GM12878 (cell line): ENCODE measurements at regions of chr15 and their contacts with region 1.

Region 1: DNA sequence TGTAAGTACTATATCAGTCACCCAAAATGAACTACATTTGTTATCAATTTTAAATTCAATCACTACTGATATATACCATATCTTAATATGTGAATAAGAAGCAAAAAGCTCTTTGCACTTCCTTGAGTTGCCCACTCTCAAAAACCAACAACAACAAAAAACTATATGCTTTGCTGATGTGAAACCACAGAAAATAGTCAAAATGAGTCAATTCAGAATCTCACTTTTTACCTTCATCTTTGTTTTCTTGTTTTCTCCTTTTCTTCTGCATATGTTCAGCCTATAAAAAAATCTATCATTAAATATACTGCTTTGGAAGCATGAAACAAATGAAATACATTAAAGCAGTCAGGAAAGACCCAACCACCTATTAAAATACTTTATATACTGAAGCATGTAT is 80.7 kb downstream of the UBR1 start:
- DNase-seq: no peak
- ATAC-seq: no peak
- H3K4me3 ChIP-seq: no peak overlapping the region
- H3K27ac ChIP-seq: no peak overlapping the region
- H3K4me1 ChIP-seq: peaks cover 4% of the 10 kb centered on the region; the same call in 1 of the 2 replicates
- H3K27me3 ChIP-seq: no peaks in the 10 kb centered on the region
- CTCF ChIP-seq: no peak
- EP300 ChIP-seq: no peak
- POLR2A ChIP-seq: no peak
- RAD21 ChIP-seq: no peak

Region 2: DNA sequence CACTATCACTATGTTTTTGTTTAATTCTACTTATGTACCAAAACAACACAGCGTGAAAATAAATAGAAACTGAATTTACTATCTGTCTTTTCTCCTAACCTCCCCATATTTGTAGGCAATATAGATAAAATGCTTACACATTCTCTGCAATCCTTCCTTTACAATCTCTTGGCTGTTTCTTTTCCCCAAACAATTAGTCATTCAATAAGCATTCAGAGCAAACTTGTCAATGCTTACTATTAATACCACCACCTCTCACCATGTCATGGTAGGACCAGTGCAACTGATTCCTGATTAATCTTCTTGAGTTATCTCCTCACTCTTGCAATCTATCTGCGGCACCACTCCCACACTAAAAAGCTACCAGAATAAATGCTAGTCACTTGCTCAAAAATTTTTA is 30.6 kb before region 1 on chr15:
- CTCF ChIA-PET with region 1: no interaction called
- POLR2A ChIA-PET with region 1: interaction called, 11 read pairs
- RAD21 ChIA-PET with region 1: no interaction called
- SMC1A ChIA-PET with region 1: no interaction called
- in situ Hi-C with region 1: no loop called
- intact Hi-C with region 1: no loop called
- DNase-seq: no peak
- ATAC-seq: no peak
- H3K4me3 ChIP-seq: no peak overlapping the region
- H3K27ac ChIP-seq: no peak overlapping the region
- H3K4me1 ChIP-seq: no peaks in the 10 kb centered on the region
- H3K27me3 ChIP-seq: no peaks in the 10 kb centered on the region
- CTCF ChIP-seq: no peak
- EP300 ChIP-seq: no peak
- POLR2A ChIP-seq: no peak
- RAD21 ChIP-seq: no peak

Region 3: GRCh38 chr15:43009206-43009605 is 15.9 kb before region 1 on chr15:
- CTCF ChIA-PET with region 1: no interaction called
- POLR2A ChIA-PET with region 1: no interaction called
- RAD21 ChIA-PET with region 1: no interaction called
- SMC1A ChIA-PET with region 1: no interaction called
- in situ Hi-C with region 1: no loop called
- intact Hi-C with region 1: no loop called
- DNase-seq: no peak
- ATAC-seq: no peak
- H3K4me3 ChIP-seq: no peak overlapping the region
- H3K27ac ChIP-seq: no peak overlapping the region
- H3K4me1 ChIP-seq: no peaks in the 10 kb centered on the region
- H3K27me3 ChIP-seq: no peaks in the 10 kb centered on the region
- CTCF ChIP-seq: no peak
- EP300 ChIP-seq: no peak
- POLR2A ChIP-seq: no peak
- RAD21 ChIP-seq: no peak

Region 4: DNA sequence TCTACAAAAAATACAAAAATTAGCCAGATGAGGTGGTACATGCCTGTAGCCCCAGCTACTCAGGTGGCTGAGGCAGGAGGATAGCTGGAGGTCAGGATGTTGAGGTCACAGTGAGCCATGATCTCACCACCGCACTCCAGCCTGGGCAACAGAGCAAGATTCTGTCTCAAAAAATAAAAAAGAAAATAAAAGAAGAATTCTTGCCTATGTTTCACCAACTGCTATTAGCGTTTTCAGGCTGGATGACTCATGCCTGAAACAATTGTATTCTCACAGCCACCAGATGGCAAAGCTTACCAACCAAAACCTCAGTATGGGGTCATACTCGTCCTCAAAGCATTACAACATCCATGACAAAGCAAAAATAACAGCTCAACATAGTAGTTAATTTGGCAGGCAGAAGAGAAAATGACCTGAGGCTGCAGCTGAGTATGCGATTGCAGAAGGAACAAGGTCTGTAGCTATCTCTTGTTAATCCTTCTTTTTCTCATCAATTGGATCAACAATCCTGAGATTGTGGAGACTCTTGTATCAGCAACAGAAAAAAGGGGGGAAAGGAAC is 415.7 kb after region 1 on chr15:
- CTCF ChIA-PET with region 1: no interaction called
- POLR2A ChIA-PET with region 1: interaction called, 11 read pairs
- RAD21 ChIA-PET with region 1: no interaction called
- SMC1A ChIA-PET with region 1: no interaction called
- in situ Hi-C with region 1: no loop called
- intact Hi-C with region 1: no loop called
- DNase-seq: peak; percentile 12
- ATAC-seq: peak; percentile 95
- H3K4me3 ChIP-seq: no peak overlapping the region
- H3K27ac ChIP-seq: no peak overlapping the region
- H3K4me1 ChIP-seq: peaks cover 7% of the 10 kb centered on the region; the same call in 1 of the 2 replicates
- H3K27me3 ChIP-seq: no peaks in the 10 kb centered on the region
- CTCF ChIP-seq: peak; percentile 23 to 66 (median 23); a peak in 3 of 6 replicates
- EP300 ChIP-seq: no peak
- POLR2A ChIP-seq: no peak
- RAD21 ChIP-seq: peak; percentile 50